Activated T-helper 2 cell treated with anti-CD3 and anti-CD28 coated beads, Interferon-gamma antibody, Interleukin-2, Interleukin-4, amounts not matched to agents 10 μg/mL and 5 μg/mL and 100 μg/mL, durations not matched to agents 14 hours and 24 hours and 36 hours (primary cell): ENCODE measurements at regions of chr9 and their contacts with region 1.

Region 1: GRCh38 chr9:133375724-133376654 is at the starts of genes STKLD1 and SURF4:
- DNase-seq: peak; percentile 96
- H3K4me3 Mint-ChIP-seq: peak within 1 kb of the TSS; percentile 87
- H3K27ac Mint-ChIP-seq: peak within 1 kb of the TSS; percentile 96
- H3K4me1 Mint-ChIP-seq: peaks cover 25% of the 10 kb centered on the region
- H3K27me3 Mint-ChIP-seq: peaks cover 2% of the 10 kb centered on the region
- total RNA-seq, gene STKLD1: 0.87 and 1.0 TPM in 2 replicates
- total RNA-seq, gene SURF4: 388 and 393 TPM in 2 replicates

Region 2: GRCh38 chr9:133030317-133031129 is 345.5 kb before region 1 on chr9 and contains the start of gene GTF3C5:
- intact Hi-C with region 1: loop called (anchors 10 kb)
- DNase-seq: peak; percentile 92
- H3K4me3 Mint-ChIP-seq: peak within 1 kb of the TSS; percentile 98
- H3K27ac Mint-ChIP-seq: peak within 1 kb of the TSS; percentile 96
- H3K4me1 Mint-ChIP-seq: peaks cover 31% of the 10 kb centered on the region
- H3K27me3 Mint-ChIP-seq: no peaks in the 10 kb centered on the region
- total RNA-seq, gene GTF3C5: 81.6 and 89.7 TPM in 2 replicates

Region 3: GRCh38 chr9:133335878-133336811 is 39.8 kb before region 1 on chr9 and contains the start of gene SURF6:
- intact Hi-C with region 1: loop called (anchors 1 kb)
- DNase-seq: peak; percentile 93
- H3K4me3 Mint-ChIP-seq: peak within 1 kb of the TSS; percentile 94
- H3K27ac Mint-ChIP-seq: peak within 1 kb of the TSS; percentile 89
- H3K4me1 Mint-ChIP-seq: peaks cover 17% of the 10 kb centered on the region
- H3K27me3 Mint-ChIP-seq: no peaks in the 10 kb centered on the region
- total RNA-seq, gene SURF6: 23.0 and 24.4 TPM in 2 replicates

Region 4: DNA sequence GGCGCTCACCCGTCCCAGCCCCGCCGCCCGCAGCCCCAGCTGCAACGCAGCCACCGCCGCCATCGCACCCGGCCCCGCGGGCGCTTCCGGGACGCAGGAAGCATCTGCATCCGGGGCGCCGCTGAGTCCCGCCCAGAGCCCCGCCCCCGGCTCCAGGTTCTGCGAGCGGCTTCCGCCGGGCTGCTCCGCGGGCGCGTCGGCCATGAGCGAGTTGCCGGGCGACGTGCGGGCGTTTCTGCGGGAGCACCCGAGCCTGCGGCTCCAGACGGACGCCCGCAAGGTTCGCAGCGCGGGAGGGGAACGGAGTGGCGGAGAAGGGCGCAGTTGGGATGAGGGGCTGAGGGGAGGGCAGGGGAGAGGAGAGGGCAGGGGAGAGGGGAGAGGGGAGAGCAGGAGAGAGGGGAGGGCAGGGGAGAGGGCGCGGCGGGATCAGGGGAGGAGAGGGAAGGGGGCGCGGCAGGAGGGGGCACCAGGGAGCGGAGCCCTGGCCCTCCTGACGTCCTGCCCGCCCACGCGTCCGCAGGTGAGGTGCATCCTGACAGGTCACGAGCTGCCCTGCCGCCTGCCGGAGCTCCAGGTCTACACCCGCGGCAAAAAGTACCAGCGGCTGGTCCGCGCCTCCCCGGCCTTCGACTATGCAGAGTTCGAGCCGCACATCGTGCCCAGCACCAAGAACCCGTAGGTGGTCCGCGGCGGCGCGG is 19.4 kb before region 1 on chr9 and contains the starts of genes SURF1 and SURF2:
- intact Hi-C with region 1: loop called (anchors 1 kb)
- DNase-seq: peak; percentile 88
- H3K4me3 Mint-ChIP-seq: peak within 1 kb of the TSS; percentile 88
- H3K27ac Mint-ChIP-seq: peak within 1 kb of the TSS; percentile 74
- H3K4me1 Mint-ChIP-seq: peaks cover 41% of the 10 kb centered on the region
- H3K27me3 Mint-ChIP-seq: no peaks in the 10 kb centered on the region
- total RNA-seq, gene SURF1: 32.4 and 33.0 TPM in 2 replicates
- total RNA-seq, gene SURF2: 16.9 and 22.1 TPM in 2 replicates

Region 5: GRCh38 chr9:133478851-133479711 is 103.1 kb after region 1 on chr9 and contains the start of gene SLC2A6:
- intact Hi-C with region 1: loop called (anchors 5 kb)
- DNase-seq: peak; percentile 79
- H3K4me3 Mint-ChIP-seq: peak within 1 kb of the TSS; percentile 72
- H3K27ac Mint-ChIP-seq: no peak within 1 kb of the TSS
- H3K4me1 Mint-ChIP-seq: peaks cover 11% of the 10 kb centered on the region
- H3K27me3 Mint-ChIP-seq: peaks cover 8% of the 10 kb centered on the region
- total RNA-seq, gene SLC2A6: 6.1 and 6.5 TPM in 2 replicates